Common myeloid progenitor, CD34-positive (primary cell): ENCODE measurements at regions of chr17 and their contacts with region 1.

Region 1: GRCh38 chr17:76557368-76558197 is 17.7 kb downstream of the PRCD start:
- DNase-seq: peak; percentile 98 to 99 (median 98)
- H3K4me3 ChIP-seq: peak overlapping the region; percentile 30 to 99 (median 87)
- H3K27ac ChIP-seq: peak overlapping the region; percentile 89 to 90
- H3K4me1 ChIP-seq: peaks cover 13 to 78% (median 57%) of the 10 kb centered on the region in 4 experiments
- H3K27me3 ChIP-seq: no peaks in the 10 kb centered on the region

Region 2: GRCh38 chr17:76523084-76524037 is 34.2 kb before region 1 on chr17:
- CTCF ChIA-PET with region 1: interaction called, 63 read pairs
- POLR2A ChIA-PET with region 1: interaction called, 6 read pairs
- DNase-seq: peak; percentile 62 to 72 (median 69)
- H3K4me3 ChIP-seq: peak overlapping the region in 2 of 7 experiments; percentile 19 to 34
- H3K27ac ChIP-seq: no peak overlapping the region
- H3K4me1 ChIP-seq: peaks cover 0 to 24% (median 22%) of the 10 kb centered on the region in 4 experiments
- H3K27me3 ChIP-seq: no peaks in the 10 kb centered on the region

Region 3: GRCh38 chr17:76567634-76568432 is 10.2 kb after region 1 on chr17:
- CTCF ChIA-PET with region 1: interaction called, 57 read pairs
- POLR2A ChIA-PET with region 1: interaction called, 8 read pairs
- DNase-seq: peak; percentile 68 to 95 (median 94)
- H3K4me3 ChIP-seq: peak overlapping the region in 4 of 7 experiments; percentile 2 to 34 (median 22)
- H3K27ac ChIP-seq: no peak overlapping the region
- H3K4me1 ChIP-seq: peaks cover 3 to 43% (median 32%) of the 10 kb centered on the region in 4 experiments
- H3K27me3 ChIP-seq: no peaks in the 10 kb centered on the region

Region 4: DNA sequence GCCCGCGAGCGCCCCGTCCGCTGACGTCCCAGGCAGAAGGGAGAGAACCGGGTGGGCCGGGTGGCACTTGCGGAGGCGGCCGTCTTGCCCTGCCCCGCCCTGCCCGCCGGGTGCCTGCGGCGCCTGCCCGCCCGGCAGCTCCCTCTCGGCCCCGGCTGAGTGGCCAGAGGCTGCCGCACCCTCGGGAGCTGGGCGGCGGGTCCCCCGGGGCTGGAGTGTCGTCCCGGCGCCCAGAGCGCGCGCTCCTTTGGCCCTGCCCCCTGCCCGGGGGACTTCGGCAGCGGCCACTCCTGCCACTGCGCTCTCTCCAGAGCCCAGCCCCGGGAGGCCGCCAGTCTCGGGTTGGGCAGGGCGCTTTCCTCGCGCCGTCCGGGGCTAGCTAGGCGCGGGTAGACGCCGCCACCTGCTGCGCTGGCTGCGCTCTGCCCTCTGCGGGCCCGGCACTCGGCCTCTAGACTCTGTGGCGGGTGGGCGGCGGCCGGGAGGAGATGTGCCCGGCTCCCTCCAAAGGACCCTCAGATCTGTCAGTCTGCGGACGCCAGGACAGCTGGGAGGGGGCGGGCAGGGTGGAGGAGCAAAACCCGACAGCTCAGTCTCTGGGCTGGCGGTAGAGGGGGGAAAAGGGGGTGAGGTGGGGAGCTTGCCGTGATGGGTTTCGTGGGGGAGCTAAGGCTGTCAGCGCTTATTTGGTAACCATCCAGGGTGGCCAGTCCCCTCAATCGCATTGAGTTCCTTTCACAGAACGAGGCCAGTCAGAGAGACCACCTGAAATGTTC is 28.4 kb after region 1 on chr17 and contains the start of gene ST6GALNAC2:
- CTCF ChIA-PET with region 1: interaction called, 50 read pairs
- POLR2A ChIA-PET with region 1: interaction called, 4 read pairs
- DNase-seq: peak; percentile 53 to 75 (median 66)
- H3K4me3 ChIP-seq: peak within 1 kb of the TSS; percentile 42 to 78 (median 60)
- H3K27ac ChIP-seq: no peak within 1 kb of the TSS
- H3K4me1 ChIP-seq: peaks cover 0 to 26% (median 19%) of the 10 kb centered on the region in 4 experiments
- H3K27me3 ChIP-seq: peaks cover 13 to 57% (median 27%) of the 10 kb centered on the region in 5 experiments

Region 5: DNA sequence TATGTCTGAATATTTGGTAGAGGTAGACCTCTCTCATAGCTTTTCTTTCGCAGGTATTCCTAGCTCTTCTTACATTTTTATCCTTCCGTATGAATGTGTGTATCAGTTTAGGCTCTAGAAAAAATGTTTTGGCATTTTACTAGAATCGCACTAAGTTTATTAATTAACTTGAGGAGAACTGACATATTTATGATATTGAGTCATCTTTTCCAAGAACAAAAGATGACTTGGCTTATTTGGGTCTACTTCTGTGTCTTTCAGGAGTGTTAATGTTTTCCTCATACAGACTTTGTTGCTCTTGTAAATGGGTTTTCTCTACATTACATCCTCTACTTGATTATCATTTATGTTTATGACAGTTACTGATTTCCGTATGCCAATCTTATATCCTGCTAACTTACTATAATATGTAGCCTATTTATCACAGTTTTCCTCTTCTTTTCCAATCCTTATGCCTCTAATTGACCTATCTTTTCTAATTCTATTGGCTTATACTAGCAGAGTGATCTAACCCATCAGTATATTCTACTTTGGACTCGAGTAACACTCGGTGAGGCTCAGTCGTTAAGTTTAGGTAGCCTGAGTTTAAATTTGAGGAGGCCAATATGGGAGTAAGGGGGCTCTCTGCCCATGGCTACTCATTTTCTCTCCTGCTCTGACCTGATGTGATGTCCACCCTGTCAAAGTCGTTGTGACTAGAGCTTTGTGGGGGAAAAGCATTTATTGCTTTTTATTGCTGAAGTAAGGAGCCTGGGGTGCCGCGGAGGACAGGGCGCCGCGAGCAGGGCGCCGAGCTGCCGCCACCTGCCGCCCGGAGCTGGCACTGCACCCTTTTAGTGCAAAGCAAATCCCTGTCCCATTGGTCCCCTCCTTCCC is 65.9 kb after region 1 on chr17:
- CTCF ChIA-PET with region 1: interaction called, 49 read pairs
- POLR2A ChIA-PET with region 1: no interaction called
- DNase-seq: peak; percentile 63 to 78 (median 77)
- H3K4me3 ChIP-seq: peak overlapping the region in 1 of 7 experiments; percentile 16
- H3K27ac ChIP-seq: no peak overlapping the region
- H3K4me1 ChIP-seq: peaks cover 0 to 6% (median 0%) of the 10 kb centered on the region in 4 experiments
- H3K27me3 ChIP-seq: peaks cover 0 to 2% (median 0%) of the 10 kb centered on the region in 5 experiments